ENCODE measurements at regions of chr18 and their contacts with region 1.

Region 1: GRCh38 chr18:51197661-51198424 is at the start of gene MEX3C:
- DNase-seq: peak; percentile 94 to 96
- H3K4me3 ChIP-seq: peak within 1 kb of the TSS; percentile 57
- H3K4me3 Mint-ChIP-seq: peak within 1 kb of the TSS; percentile 89
- H3K27ac Mint-ChIP-seq: peak within 1 kb of the TSS; percentile 97
- H3K4me1 ChIP-seq: no peaks in the 10 kb centered on the region
- H3K4me1 Mint-ChIP-seq: peaks cover 7% of the 10 kb centered on the region
- H3K27me3 ChIP-seq: no peaks in the 10 kb centered on the region
- H3K27me3 Mint-ChIP-seq: no peaks in the 10 kb centered on the region
- CTCF ChIP-seq: peak in 1 of 2 experiments; percentile 10
- total RNA-seq, gene MEX3C: 44.8 and 47.0 TPM in 2 replicates

Region 2: DNA sequence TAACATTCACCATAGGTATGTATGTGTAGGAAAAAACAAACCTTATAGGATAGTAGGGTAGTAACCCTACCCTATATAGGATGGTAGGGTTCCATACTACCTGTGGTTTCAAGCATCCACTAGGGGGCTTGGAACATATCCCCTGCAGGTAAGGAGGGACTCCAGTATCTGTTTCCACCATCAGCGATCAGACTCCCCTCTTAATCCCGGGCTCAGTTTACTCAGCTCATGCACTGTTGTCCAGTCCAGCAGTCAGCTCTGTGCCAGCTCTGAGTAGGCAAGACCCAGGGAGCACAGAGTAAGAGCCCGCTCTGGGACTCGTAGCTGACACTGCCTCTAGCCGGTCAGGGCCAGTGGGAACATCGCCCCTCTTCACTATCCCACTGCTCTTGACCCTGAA is 62.0 kb before region 1 on chr18:
- CTCF ChIA-PET with region 1: interaction called, 4 read pairs
- POLR2A ChIA-PET with region 1: interaction called, 3 read pairs
- intact Hi-C with region 1: loop called (anchors 5 kb)
- DNase-seq: peak in 1 of 2 experiments; percentile 13
- H3K4me3 ChIP-seq: no peak overlapping the region
- H3K4me3 Mint-ChIP-seq: no peak overlapping the region
- H3K27ac Mint-ChIP-seq: no peak overlapping the region
- H3K4me1 ChIP-seq: no peaks in the 10 kb centered on the region
- H3K4me1 Mint-ChIP-seq: no peaks in the 10 kb centered on the region
- H3K27me3 ChIP-seq: no peaks in the 10 kb centered on the region
- H3K27me3 Mint-ChIP-seq: no peaks in the 10 kb centered on the region
- CTCF ChIP-seq: peak; percentile 17 to 24

Region 3: GRCh38 chr18:51235011-51235789 is 37.4 kb after region 1 on chr18:
- CTCF ChIA-PET with region 1: no interaction called
- POLR2A ChIA-PET with region 1: no interaction called
- intact Hi-C with region 1: loop called (anchors 1 kb)
- DNase-seq: no peak
- H3K4me3 ChIP-seq: no peak overlapping the region
- H3K4me3 Mint-ChIP-seq: no peak overlapping the region
- H3K27ac Mint-ChIP-seq: peak overlapping the region; percentile 68
- H3K4me1 ChIP-seq: peaks cover 18% of the 10 kb centered on the region
- H3K4me1 Mint-ChIP-seq: peaks cover 18% of the 10 kb centered on the region
- H3K27me3 ChIP-seq: no peaks in the 10 kb centered on the region
- H3K27me3 Mint-ChIP-seq: no peaks in the 10 kb centered on the region
- CTCF ChIP-seq: no peak

Region 4: GRCh38 chr18:51321336-51322095 is 123.7 kb after region 1 on chr18:
- CTCF ChIA-PET with region 1: no interaction called
- POLR2A ChIA-PET with region 1: no interaction called
- intact Hi-C with region 1: loop called (anchors 5 kb)
- DNase-seq: peak; percentile 68 to 74
- H3K4me3 ChIP-seq: no peak overlapping the region
- H3K4me3 Mint-ChIP-seq: no peak overlapping the region
- H3K27ac Mint-ChIP-seq: peak overlapping the region; percentile 72
- H3K4me1 ChIP-seq: peaks cover 25% of the 10 kb centered on the region
- H3K4me1 Mint-ChIP-seq: peaks cover 14% of the 10 kb centered on the region
- H3K27me3 ChIP-seq: no peaks in the 10 kb centered on the region
- H3K27me3 Mint-ChIP-seq: no peaks in the 10 kb centered on the region
- CTCF ChIP-seq: no peak